Activated CD4-positive, alpha-beta memory T cell treated with anti-CD3 and anti-CD28 coated beads for 36 hours (primary cell): ENCODE measurements at regions of chr22 and their contacts with region 1.

Region 1: GRCh38 chr22:45268958-45269844 is 15.5 kb upstream of the UPK3A start:
- DNase-seq: peak; percentile 86
- H3K4me3 Mint-ChIP-seq: peak overlapping the region; percentile 69
- H3K27ac Mint-ChIP-seq: peak overlapping the region; percentile 46
- H3K4me1 Mint-ChIP-seq: peaks cover 6% of the 10 kb centered on the region
- H3K27me3 Mint-ChIP-seq: peaks cover 13% of the 10 kb centered on the region

Region 2: GRCh38 chr22:45309472-45310227 is 40.4 kb after region 1 on chr22 and contains the start of gene FAM118A:
- CTCF ChIA-PET with region 1: no interaction called
- POLR2A ChIA-PET with region 1: no interaction called
- intact Hi-C with region 1: loop called (anchors 2 kb)
- DNase-seq: peak; percentile 97
- H3K4me3 Mint-ChIP-seq: peak within 1 kb of the TSS; percentile 83
- H3K27ac Mint-ChIP-seq: peak within 1 kb of the TSS; percentile 92
- H3K4me1 Mint-ChIP-seq: peaks cover 44% of the 10 kb centered on the region
- H3K27me3 Mint-ChIP-seq: no peaks in the 10 kb centered on the region
- total RNA-seq, gene FAM118A: 55.0 to 56.5 TPM

Region 3: DNA sequence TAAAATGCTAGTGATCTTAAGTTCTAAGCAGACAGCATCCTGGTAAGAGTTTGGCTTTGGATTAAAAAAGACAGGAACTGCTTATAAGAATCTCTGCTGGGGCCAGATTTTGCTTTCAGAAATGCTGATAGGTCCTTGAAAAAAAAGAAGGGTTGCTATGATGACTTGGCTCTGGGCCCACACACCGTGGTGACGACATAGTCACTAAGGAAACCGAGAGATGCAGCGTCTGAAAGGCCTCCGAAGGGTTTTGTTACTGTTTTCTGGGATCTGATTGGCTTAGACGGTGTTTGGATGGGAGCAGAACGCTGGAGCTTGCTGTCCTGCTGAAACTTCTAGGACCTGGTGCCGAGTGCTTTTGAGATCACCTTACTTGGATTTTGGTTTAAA is 49.0 kb after region 1 on chr22:
- CTCF ChIA-PET with region 1: no interaction called
- POLR2A ChIA-PET with region 1: no interaction called
- intact Hi-C with region 1: loop called (anchors 2 kb)
- DNase-seq: peak; percentile 95
- H3K4me3 Mint-ChIP-seq: peak overlapping the region; percentile 75
- H3K27ac Mint-ChIP-seq: peak overlapping the region; percentile 95
- H3K4me1 Mint-ChIP-seq: peaks cover 67% of the 10 kb centered on the region
- H3K27me3 Mint-ChIP-seq: no peaks in the 10 kb centered on the region

Region 4: DNA sequence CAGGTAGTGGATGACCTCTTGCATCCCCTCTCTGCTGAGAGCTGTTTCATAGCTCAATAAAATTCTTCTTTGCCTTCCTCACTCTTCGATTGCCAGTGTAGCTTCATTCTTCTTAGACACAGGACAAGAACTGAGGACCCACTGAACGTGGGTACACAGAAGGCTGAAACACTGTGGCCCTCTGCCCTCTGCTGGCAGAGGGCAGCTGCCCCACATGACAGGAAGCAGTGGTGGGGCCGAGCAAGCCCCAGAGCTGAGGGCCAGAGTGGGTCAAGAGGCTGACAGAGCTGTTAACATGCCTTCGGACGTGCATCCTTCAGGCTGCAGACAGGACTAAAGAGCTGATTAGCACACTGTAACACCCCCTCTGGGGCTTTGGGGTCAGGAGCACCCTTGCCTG is 128.6 kb after region 1 on chr22:
- CTCF ChIA-PET with region 1: interaction called, 3 read pairs
- POLR2A ChIA-PET with region 1: no interaction called
- intact Hi-C with region 1: loop called (anchors 5 kb)
- DNase-seq: no peak
- H3K4me3 Mint-ChIP-seq: no peak overlapping the region
- H3K27ac Mint-ChIP-seq: no peak overlapping the region
- H3K4me1 Mint-ChIP-seq: no peaks in the 10 kb centered on the region
- H3K27me3 Mint-ChIP-seq: peaks cover 2% of the 10 kb centered on the region

Region 5: GRCh38 chr22:45435544-45436139 is 166.4 kb after region 1 on chr22:
- CTCF ChIA-PET with region 1: interaction called, 9 read pairs
- POLR2A ChIA-PET with region 1: no interaction called
- intact Hi-C with region 1: loop called (anchors 1 kb)
- DNase-seq: peak; percentile 82
- H3K4me3 Mint-ChIP-seq: no peak overlapping the region
- H3K27ac Mint-ChIP-seq: no peak overlapping the region
- H3K4me1 Mint-ChIP-seq: peaks cover 10% of the 10 kb centered on the region
- H3K27me3 Mint-ChIP-seq: no peaks in the 10 kb centered on the region

Region 6: DNA sequence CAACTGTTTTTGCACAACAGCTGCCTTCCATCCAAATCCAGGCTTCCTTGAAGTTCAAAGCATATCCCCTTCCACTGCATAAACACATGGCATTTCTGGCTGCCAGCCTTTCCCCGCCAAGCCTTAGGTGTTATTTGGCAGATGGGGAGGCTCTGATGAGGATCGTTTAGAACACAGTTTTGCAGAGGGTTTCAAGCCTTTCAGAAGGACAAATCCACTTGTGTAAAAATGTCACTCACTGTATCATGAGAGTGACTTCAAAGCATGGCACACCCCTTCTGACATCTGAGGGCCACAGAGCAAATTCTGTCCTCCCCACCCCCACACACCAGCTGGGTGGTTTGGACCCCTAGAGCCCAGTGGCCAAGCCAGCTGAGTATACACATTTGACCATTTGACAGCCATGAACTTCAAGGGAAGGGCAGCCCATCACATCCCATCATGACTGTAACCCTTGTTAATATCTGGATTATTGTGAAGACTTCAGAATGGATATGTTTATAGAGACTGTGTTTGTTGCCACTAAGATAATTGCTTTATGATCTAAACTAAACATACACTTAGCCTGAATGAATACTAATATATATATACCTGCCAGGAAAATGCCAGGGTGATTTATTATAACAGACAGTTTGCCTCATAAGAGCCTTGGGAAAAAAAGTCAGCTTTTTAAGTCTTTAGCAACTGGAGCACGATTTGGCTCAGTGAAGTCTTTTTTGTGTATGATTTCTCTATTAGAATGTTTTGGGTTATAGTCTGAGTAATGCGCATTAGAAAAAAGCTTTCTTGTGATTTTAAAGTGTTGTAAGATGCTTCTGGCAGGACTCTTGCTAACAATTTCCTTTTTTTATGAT is 265.4 kb after region 1 on chr22:
- CTCF ChIA-PET with region 1: no interaction called
- POLR2A ChIA-PET with region 1: no interaction called
- intact Hi-C with region 1: no loop called
- DNase-seq: no peak
- H3K4me3 Mint-ChIP-seq: no peak overlapping the region
- H3K27ac Mint-ChIP-seq: no peak overlapping the region
- H3K4me1 Mint-ChIP-seq: no peaks in the 10 kb centered on the region
- H3K27me3 Mint-ChIP-seq: no peaks in the 10 kb centered on the region

Region 7: DNA sequence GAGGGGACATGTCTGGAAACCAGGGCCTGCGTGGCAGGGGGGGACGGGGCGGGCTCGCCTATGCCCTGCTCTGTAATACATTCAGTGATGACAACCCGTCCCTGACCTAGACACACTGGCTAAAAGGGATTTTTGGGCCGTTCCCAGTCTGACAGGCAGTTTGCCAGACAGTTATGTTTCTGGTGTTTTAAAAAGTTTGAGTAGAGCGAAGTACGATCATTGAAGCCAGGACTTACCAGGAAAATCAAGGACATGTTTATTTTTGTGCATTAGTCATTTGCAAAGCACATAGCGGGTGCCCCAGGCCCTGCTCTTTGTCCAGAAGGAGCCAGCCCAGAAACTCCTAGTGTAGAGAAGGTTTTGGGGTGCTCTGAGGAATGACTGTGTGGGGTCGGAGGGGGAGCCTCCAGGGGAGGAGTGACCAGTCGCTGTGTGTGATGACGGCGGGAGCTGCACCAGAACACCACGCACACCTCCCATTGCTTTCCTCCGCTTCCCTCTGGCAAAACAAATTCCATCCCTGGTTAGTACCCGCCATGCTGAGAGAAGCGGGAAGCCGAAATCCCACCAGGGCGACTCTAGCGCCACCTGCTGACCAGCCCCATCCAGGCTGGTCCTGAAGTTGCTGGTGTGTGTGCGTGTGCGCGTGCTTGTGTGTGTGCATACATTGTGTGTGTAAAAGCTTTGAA is 284.3 kb after region 1 on chr22:
- CTCF ChIA-PET with region 1: interaction called, 3 read pairs
- POLR2A ChIA-PET with region 1: no interaction called
- intact Hi-C with region 1: loop called (anchors 5 kb)
- DNase-seq: peak; percentile 66
- H3K4me3 Mint-ChIP-seq: no peak overlapping the region
- H3K27ac Mint-ChIP-seq: no peak overlapping the region
- H3K4me1 Mint-ChIP-seq: peaks cover 2% of the 10 kb centered on the region
- H3K27me3 Mint-ChIP-seq: peaks cover 9% of the 10 kb centered on the region